ENCODE measurements at regions of chr14 and their contacts with region 1.

Region 1: GRCh38 chr14:64823305-64823861 is 56.3 kb downstream of the SPTB start:
- DNase-seq: peak; percentile 38
- ATAC-seq: peak; percentile 100
- H3K4me3 ChIP-seq: peak overlapping the region in 1 of 2 experiments; percentile 20; a peak in 1 of 4 replicates
- H3K27ac ChIP-seq: no peak overlapping the region
- H3K4me1 ChIP-seq: peaks cover 0 to 15% of the 10 kb centered on the region in 2 experiments; a peak in 1 of 4 replicates
- H3K27me3 ChIP-seq: peaks cover 9% of the 10 kb centered on the region; the same call in 1 of the 2 replicates
- CTCF ChIP-seq: peak; percentile 75 to 82 (median 80)
- POLR2A ChIP-seq: no peak
- RAD21 ChIP-seq: peak; percentile 83

Region 2: DNA sequence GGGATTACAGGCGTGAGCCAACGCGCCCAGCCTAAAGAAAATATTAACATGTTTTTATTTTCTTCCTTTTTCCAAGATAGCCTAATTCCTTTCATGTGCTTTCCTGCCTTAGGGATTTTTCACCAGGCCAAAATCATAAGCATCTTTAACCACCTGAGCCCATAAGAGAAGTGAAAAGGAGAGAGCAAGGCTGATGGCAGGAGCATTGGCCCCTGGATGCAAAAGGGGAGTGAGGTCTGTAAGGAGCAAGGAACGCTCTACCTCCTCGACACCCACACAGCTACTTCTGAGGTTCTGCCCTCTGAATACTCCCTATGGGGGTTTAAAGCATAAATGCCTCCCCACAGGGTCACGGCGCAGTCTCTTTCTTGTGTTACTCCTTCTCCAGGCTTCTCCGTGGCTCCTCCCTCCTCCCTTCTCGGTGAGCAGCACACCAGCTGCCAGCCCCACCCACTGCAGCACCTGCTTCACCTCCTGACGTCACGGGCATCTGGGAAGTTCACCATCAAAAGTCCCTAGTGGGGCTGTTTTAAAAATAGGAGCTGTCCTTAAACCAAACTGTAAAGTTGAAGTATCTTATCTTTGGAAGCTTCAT is 11.1 kb before region 1 on chr14:
- CTCF ChIA-PET with region 1: interaction called, 14 read pairs
- POLR2A ChIA-PET with region 1: no interaction called
- RAD21 ChIA-PET with region 1: no interaction called
- intact Hi-C with region 1: no loop called
- DNase-seq: peak; percentile 47
- ATAC-seq: peak; percentile 99
- H3K4me3 ChIP-seq: peak overlapping the region in 1 of 2 experiments; percentile 4; a peak in 1 of 4 replicates
- H3K27ac ChIP-seq: no peak overlapping the region
- H3K4me1 ChIP-seq: peaks cover 7 to 11% of the 10 kb centered on the region in 2 experiments
- H3K27me3 ChIP-seq: no peaks in the 10 kb centered on the region
- CTCF ChIP-seq: no peak
- POLR2A ChIP-seq: no peak
- RAD21 ChIP-seq: no peak

Region 3: DNA sequence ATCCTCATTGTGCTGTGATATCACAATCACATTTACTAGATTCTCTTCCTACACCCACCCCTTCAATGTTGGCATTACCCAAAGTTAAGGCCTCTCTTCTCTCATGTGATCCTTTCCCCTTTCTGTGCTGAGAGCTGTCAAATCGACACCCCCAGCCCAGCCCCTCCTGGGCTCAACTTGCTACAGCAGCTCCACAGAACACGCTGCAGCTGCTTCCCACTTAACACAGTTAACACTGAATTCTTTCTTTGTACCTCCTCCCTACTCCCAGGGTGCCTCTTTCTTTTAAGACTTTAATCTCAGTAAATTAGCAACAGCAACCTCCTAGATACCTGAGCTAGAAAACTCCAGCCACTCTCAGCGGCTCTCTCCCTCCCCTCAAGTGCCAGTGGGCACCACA is 38.5 kb after region 1 on chr14:
- CTCF ChIA-PET with region 1: no interaction called
- POLR2A ChIA-PET with region 1: no interaction called
- RAD21 ChIA-PET with region 1: no interaction called
- intact Hi-C with region 1: loop called (anchors 5 kb)
- DNase-seq: no peak
- ATAC-seq: no peak
- H3K4me3 ChIP-seq: no peak overlapping the region
- H3K27ac ChIP-seq: no peak overlapping the region
- H3K4me1 ChIP-seq: no peaks in the 10 kb centered on the region
- H3K27me3 ChIP-seq: peaks cover 3% of the 10 kb centered on the region; the same call in 1 of the 2 replicates
- CTCF ChIP-seq: no peak
- POLR2A ChIP-seq: no peak
- RAD21 ChIP-seq: no peak

Region 4: DNA sequence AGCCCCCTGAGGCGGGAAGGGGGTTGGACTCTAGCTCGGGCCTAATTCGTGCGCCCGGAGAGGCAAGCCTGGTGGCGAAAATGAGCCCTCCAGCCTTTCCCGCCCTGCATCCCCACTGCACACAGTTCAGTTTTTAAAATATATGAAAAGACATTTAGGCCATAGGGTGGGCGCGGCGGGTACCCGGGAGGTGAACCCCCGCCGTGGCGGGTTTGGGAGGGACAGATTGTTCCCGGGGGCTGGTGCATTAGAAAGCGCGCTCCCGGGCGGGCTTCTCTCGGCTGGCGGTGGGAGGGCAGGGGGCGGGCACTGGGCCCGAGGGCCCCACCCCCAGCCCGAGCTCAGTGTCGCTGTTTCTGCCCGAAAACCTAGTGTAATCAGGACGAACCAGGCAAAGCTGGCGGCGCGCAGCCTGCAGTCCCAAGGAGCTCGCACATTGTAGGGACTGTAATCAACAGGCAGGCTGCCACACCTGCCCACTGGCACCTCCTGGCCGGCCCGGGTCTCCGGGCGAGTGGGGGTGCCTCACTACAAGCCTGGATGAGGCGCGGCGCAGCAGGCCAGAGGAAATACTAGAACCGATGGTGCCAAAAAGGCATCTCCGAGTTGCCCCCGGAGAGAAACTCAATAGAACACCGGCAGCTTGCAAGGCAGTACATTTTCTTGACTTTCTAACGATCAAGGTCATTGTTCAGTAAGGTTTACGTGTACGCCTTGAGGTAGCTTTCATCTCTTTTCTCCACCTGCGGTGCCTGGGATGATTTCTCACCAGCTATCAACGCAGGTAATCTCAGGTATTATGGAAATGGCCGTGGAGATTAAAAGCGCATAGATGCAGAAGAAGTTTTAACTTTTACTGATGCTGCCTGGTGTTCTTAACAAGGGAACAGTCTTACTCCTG is 57.1 kb after region 1 on chr14:
- CTCF ChIA-PET with region 1: interaction called, 14 read pairs
- POLR2A ChIA-PET with region 1: no interaction called
- RAD21 ChIA-PET with region 1: interaction called in 1 of 2 experiments, 3 read pairs
- intact Hi-C with region 1: no loop called
- DNase-seq: peak; percentile 26
- ATAC-seq: peak; percentile 89
- H3K4me3 ChIP-seq: peak overlapping the region; percentile 55 to 59
- H3K27ac ChIP-seq: 0 out of 2 replicates have a peak overlapping the region, but pooled peaks have one; percentile 24
- H3K4me1 ChIP-seq: peaks cover 7 to 16% of the 10 kb centered on the region in 2 experiments; a peak in 3 of 4 replicates
- H3K27me3 ChIP-seq: no peaks in the 10 kb centered on the region
- CTCF ChIP-seq: no peak
- POLR2A ChIP-seq: no peak
- RAD21 ChIP-seq: no peak

Region 5: GRCh38 chr14:64914237-64914971 is 91.0 kb after region 1 on chr14 and contains the start of gene CHURC1:
- CTCF ChIA-PET with region 1: interaction called, 22 read pairs
- POLR2A ChIA-PET with region 1: interaction called, 3 read pairs
- RAD21 ChIA-PET with region 1: interaction called in 1 of 2 experiments, 3 read pairs
- intact Hi-C with region 1: no loop called
- DNase-seq: peak; percentile 98
- ATAC-seq: peak; percentile 98
- H3K4me3 ChIP-seq: peak within 1 kb of the TSS; percentile 81 to 97
- H3K27ac ChIP-seq: peak within 1 kb of the TSS; percentile 79
- H3K4me1 ChIP-seq: peaks cover 8 to 16% of the 10 kb centered on the region in 2 experiments; a peak in 3 of 4 replicates
- H3K27me3 ChIP-seq: no peaks in the 10 kb centered on the region
- CTCF ChIP-seq: no peak
- POLR2A ChIP-seq: peak; percentile 71
- RAD21 ChIP-seq: no peak
- total RNA-seq, gene CHURC1: 47.5 TPM